K562 (cell line): ENCODE measurements at regions of chr7 and their contacts with region 1.

Region 1: DNA sequence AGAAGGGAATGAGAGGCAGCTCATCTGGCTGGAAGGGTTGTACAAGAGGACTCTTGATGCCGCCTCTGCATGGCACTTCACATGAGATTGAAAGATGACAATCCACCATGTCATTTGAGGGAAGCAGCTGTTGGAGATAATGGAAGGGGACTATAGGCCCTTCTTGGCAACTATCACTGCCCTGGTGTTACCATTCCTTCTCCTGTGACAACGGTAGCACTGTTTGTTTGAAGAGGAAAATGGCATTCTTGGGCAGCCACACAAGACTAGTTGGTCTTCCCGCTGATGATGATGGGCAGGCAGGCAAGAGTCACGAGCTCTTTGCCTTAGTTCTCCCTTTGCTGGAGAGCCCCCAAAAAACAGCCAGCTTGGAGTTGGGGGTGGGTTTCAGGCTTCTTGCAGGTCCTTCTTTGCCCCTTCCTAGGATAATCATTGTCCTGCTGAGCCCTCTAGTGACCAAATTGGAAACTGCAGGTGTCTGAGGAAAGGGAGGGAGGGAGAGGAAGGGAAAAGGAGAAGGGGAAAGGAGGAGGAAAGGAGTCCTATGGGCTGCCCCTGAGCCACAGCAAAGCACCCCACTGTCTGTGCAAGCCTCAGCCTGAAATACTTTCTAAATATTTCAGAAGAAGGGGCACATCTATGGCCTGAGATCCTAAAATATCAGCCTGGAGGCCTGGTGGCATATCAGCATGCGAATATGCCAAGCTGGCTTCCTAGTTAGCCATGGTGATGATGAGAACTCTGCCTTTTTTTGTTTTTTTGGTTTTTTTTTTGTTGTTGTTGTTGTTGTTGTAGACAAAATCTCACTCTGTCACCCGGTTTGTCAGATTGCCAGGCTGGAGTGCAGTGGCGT is 165.6 kb upstream of the KMT2E start:
- DNase-seq: peak; percentile 70 to 79 (median 74)
- ATAC-seq: peak; percentile 91
- H3K4me3 ChIP-seq: no peak overlapping the region
- H3K27ac ChIP-seq: no peak overlapping the region
- H3K4me1 ChIP-seq: no peaks in the 10 kb centered on the region
- H3K27me3 ChIP-seq: peaks cover 29 to 39% of the 10 kb centered on the region in 2 experiments
- CTCF ChIP-seq: peak; percentile 75 to 92 (median 88)
- EP300 ChIP-seq: no peak
- POLR2A ChIP-seq: no peak
- RAD21 ChIP-seq: peak; percentile 88 to 89

Region 2: DNA sequence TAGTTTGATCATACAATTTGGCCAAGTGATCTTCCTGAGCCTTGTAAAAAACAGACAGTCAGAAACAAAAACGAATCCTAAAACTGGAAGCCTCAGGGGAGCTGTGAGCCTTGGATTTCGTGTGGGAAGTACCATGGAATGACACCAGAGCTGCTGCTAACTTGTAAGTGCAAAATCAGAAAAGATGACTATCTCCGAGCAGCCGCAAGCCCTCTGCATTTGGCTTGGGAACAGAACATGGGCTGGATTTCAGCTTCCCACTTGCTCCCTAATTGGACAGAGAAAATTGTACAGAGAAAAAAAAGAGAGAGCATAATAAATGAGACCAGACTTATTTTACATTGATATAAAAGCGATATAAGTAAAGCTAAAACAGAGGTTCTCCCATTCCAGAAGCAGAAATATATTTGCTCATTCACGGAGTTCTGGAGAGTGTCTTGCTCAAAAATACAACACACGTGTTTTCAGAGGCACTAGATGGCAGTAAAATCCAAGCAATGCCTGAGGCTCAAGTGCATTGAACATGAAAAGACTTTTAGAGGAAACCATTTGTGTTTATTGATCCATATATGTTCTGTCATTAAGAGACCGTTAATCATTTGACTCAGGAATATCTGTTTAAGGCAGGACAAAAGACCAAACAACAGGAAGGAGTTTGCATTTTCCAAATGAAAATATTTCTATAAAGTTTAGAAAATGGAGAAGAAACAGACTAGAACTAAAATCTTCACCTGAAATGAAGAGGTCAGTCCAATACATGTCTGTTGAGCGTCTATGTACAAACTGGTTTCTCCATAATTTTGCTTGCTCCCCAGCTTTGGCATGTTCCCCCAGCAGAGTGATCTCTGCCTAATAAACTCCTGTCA is 1324.1 kb before region 1 on chr7:
- CTCF ChIA-PET with region 1: no interaction called
- POLR2A ChIA-PET with region 1: no interaction called
- in situ Hi-C with region 1: no loop called
- intact Hi-C with region 1: loop called (anchors 10 kb)
- DNase-seq: peak; percentile 29 to 67 (median 46)
- ATAC-seq: peak; percentile 93
- H3K4me3 ChIP-seq: no peak overlapping the region
- H3K27ac ChIP-seq: no peak overlapping the region
- H3K4me1 ChIP-seq: peaks cover 0 to 3% of the 10 kb centered on the region in 2 experiments; a peak in 2 of 5 replicates
- H3K27me3 ChIP-seq: no peaks in the 10 kb centered on the region; a peak in 1 of 5 replicates
- CTCF ChIP-seq: peak; percentile 69 to 84 (median 74)
- EP300 ChIP-seq: no peak
- POLR2A ChIP-seq: no peak
- RAD21 ChIP-seq: peak; percentile 95 to 96

Region 3: GRCh38 chr7:104231054-104232046 is 617.0 kb before region 1 on chr7:
- CTCF ChIA-PET with region 1: interaction called, 10 read pairs
- POLR2A ChIA-PET with region 1: no interaction called
- in situ Hi-C with region 1: no loop called
- intact Hi-C with region 1: loop called (anchors 1 kb)
- DNase-seq: peak; percentile 52 to 76 (median 67)
- ATAC-seq: peak; percentile 99
- H3K4me3 ChIP-seq: no peak overlapping the region
- H3K27ac ChIP-seq: no peak overlapping the region
- H3K4me1 ChIP-seq: 0 out of 5 replicates have a peak, but pooled peaks cover 0 to 2% of the 10 kb centered on the region in 2 experiments
- H3K27me3 ChIP-seq: 0 out of 5 replicates have a peak, but pooled peaks cover 0 to 3% of the 10 kb centered on the region in 2 experiments
- CTCF ChIP-seq: peak; percentile 86 to 97 (median 91)
- EP300 ChIP-seq: no peak
- POLR2A ChIP-seq: no peak
- RAD21 ChIP-seq: peak; percentile 66 to 80

Region 4: DNA sequence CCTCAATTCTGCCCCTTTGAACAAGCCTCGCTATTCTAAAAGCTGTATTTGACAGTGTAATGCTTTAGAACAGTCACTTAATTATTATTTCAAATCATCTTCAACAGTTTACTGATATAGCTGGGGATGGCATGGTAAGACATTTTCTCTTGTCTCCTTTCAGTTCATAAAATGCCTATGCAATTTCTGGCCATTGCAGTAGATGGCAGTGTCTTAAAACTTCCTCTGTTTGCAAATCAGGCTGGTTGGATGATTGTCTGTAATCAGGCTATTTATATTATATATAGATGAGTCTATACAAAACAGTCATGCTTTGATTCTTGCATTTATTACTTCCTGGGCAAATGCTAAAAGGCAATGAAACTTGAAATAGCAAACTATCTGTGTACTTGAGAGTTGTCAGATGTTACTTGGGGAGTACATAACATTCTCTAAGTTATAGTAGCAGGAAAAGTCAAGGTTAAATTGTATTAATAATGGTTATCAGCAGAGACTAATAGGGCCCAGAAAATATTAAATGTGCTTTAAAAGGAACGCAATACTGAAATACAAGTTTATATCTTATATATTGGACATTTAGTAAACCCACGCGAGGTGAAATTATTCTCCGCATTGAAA is 575.5 kb before region 1 on chr7:
- CTCF ChIA-PET with region 1: interaction called, 6 read pairs
- POLR2A ChIA-PET with region 1: no interaction called
- in situ Hi-C with region 1: no loop called
- intact Hi-C with region 1: loop called (anchors 10 kb)
- DNase-seq: peak in 3 of 4 experiments; percentile 19 to 29 (median 24)
- ATAC-seq: peak; percentile 66; the same call in 1 of the 3 replicates
- H3K4me3 ChIP-seq: no peak overlapping the region
- H3K27ac ChIP-seq: no peak overlapping the region
- H3K4me1 ChIP-seq: no peaks in the 10 kb centered on the region
- H3K27me3 ChIP-seq: peaks cover 0 to 3% of the 10 kb centered on the region in 2 experiments; a peak in 2 of 5 replicates
- CTCF ChIP-seq: peak; percentile 48 to 69 (median 60); a peak in 5 of 6 replicates
- EP300 ChIP-seq: no peak
- POLR2A ChIP-seq: no peak
- RAD21 ChIP-seq: peak; percentile 32 to 61; a peak in 3 of 4 replicates

Region 5: GRCh38 chr7:104341546-104341945 is 506.8 kb before region 1 on chr7:
- CTCF ChIA-PET with region 1: no interaction called
- POLR2A ChIA-PET with region 1: no interaction called
- in situ Hi-C with region 1: no loop called
- intact Hi-C with region 1: loop called (anchors 2 kb)
- DNase-seq: peak; percentile 10 to 44 (median 24)
- ATAC-seq: peak; percentile 85
- H3K4me3 ChIP-seq: no peak overlapping the region
- H3K27ac ChIP-seq: no peak overlapping the region
- H3K4me1 ChIP-seq: no peaks in the 10 kb centered on the region
- H3K27me3 ChIP-seq: peaks cover 0 to 2% of the 10 kb centered on the region in 2 experiments; a peak in 1 of 5 replicates
- CTCF ChIP-seq: peak; percentile 41 to 56 (median 47); a peak in 5 of 6 replicates
- EP300 ChIP-seq: no peak
- POLR2A ChIP-seq: no peak
- RAD21 ChIP-seq: peak in 1 of 2 experiments; percentile 58; a peak in 2 of 4 replicates

Region 6: DNA sequence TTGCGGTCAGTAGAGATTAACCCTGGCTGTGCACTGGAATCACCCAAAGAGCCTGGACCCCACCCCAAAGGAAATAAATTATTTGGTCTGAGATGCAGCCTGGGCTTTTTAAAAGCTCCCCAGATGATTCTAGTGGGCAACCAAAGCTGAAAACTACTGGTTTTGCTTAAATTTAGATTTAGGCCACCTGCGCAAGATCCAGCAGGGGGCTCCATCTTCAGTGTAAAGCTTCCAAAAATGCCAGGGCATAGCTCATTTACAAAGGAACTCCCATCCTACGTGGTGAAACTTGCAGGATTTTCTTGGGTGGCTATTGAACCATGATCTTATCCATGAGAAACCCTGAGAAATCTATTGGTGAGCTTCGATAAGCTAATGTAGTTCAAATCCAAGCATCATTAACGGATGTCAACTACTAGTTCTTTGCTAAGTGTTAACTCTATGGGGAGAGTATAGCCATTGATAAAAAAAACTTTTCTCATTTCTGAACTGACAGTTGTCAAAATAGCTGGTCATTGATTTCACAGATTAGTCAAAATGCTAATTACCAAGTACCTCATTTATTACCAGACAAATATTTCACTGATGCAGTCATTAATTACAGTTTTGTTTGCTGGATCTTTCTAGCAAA is 204.7 kb before region 1 on chr7:
- CTCF ChIA-PET with region 1: interaction called, 10 read pairs
- POLR2A ChIA-PET with region 1: no interaction called
- in situ Hi-C with region 1: no loop called
- intact Hi-C with region 1: loop called (anchors 1 kb)
- DNase-seq: peak; percentile 15 to 35 (median 26)
- ATAC-seq: peak; percentile 57
- H3K4me3 ChIP-seq: no peak overlapping the region
- H3K27ac ChIP-seq: no peak overlapping the region
- H3K4me1 ChIP-seq: no peaks in the 10 kb centered on the region
- H3K27me3 ChIP-seq: peaks cover 3 to 7% of the 10 kb centered on the region in 2 experiments; a peak in 3 of 5 replicates
- CTCF ChIP-seq: peak; percentile 57 to 68 (median 66)
- EP300 ChIP-seq: no peak
- POLR2A ChIP-seq: no peak
- RAD21 ChIP-seq: peak; percentile 51 to 59; a peak in 3 of 4 replicates

Region 7: DNA sequence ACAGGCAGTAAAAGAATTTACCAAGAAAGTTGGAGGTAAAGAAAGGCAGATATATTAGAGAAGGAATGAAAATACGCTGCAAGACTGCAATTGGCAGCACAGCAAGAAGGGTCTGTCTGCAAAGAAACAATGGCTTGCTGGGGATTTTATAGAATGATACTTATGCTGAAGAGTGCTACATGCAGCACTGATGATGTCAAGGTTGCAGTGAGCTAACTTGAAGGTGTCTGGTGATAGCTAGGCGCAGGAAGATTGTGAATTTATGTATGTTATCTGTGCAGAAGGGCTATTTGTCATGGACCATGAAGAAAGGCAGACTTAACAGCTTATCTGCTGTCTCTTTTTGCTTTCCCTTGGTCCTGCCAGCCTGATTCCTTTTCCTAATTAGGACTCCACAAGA is 153.7 kb before region 1 on chr7:
- CTCF ChIA-PET with region 1: no interaction called
- POLR2A ChIA-PET with region 1: no interaction called
- in situ Hi-C with region 1: no loop called
- intact Hi-C with region 1: no loop called
- DNase-seq: no peak
- ATAC-seq: no peak
- H3K4me3 ChIP-seq: no peak overlapping the region
- H3K27ac ChIP-seq: no peak overlapping the region
- H3K4me1 ChIP-seq: no peaks in the 10 kb centered on the region
- H3K27me3 ChIP-seq: no peaks in the 10 kb centered on the region
- CTCF ChIP-seq: no peak
- EP300 ChIP-seq: no peak
- POLR2A ChIP-seq: no peak
- RAD21 ChIP-seq: no peak